Activated CD4-positive, alpha-beta memory T cell treated with anti-CD3 and anti-CD28 coated beads for 36 hours (primary cell): ENCODE measurements at regions of chr18 and their contacts with region 1.

Region 1: DNA sequence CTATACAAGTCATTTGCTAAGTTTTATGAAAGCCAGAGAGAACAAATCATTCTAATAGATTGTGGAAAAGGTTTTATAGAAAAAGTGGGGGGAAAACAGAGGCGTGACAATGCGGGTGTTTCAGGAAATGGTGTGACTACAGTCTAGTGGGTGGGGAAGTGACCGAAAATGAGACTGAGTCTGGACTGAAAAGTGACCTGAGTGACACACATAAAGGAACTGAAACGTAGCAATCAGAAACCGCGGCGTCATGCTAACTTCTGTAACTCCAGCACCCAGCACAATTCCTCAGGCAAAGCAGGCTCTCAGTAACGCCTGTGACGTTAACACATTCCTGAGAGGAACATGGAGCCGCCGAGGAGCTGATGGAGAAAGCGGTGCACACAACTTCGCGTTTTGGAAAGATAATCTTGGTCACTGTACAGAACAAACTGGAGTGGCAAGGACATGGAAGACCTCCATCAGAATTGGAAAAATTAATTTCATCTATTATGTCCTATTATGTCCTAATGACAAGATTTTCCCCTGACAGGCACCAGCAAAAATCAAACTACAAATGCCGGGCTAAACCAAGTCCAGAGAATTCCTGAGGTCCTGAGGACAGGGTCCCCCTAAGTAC is 1.4 kb upstream of the CD226 start:
- DNase-seq: peak; percentile 85
- H3K4me3 Mint-ChIP-seq: no peak overlapping the region
- H3K27ac Mint-ChIP-seq: no peak overlapping the region
- H3K4me1 Mint-ChIP-seq: peaks cover 50% of the 10 kb centered on the region
- H3K27me3 Mint-ChIP-seq: no peaks in the 10 kb centered on the region

Region 2: DNA sequence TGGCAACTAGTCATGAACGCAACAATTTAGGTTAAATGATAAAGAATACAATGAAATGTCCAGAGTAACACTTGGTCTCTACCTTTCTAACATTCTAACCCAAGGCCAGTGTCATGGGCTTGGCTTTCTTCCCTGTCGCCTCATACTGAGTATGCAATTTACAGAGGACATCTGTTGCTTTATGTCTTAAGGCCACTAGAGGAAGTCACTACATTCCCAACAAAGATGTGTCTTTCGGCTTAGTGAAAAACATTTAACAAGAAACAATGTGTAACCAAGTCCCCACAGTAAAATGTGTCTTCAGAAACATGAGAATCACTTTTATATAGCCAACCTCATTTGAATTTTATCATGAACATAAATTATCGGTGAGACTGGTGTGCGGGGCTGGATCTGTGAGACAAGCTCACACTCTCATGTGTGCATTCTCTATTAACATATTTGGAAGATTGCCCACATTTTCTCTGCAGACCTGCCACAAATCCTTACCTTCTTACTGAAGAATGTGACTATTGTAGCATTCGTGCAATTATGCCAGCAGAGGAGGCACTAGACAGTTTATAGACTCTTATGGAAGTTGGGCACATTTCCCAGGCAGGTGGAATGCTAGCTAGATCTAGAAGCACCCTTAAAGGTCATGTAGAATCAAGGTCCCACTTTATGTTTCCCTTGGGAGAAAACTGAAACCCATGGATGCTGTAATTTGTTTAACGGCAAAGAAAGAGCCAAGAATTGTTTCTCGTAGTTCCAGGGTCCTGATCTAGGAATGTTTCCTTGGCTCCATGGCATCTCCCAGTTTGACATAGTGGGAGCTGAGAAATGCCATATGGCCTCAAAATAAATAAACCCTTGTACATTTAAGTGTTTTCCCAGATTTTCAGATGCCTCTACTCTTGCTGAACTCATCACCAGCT is 103.2 kb before region 1 on chr18:
- CTCF ChIA-PET with region 1: no interaction called
- POLR2A ChIA-PET with region 1: no interaction called
- intact Hi-C with region 1: no loop called
- DNase-seq: no peak
- H3K4me3 Mint-ChIP-seq: no peak overlapping the region
- H3K27ac Mint-ChIP-seq: no peak overlapping the region
- H3K4me1 Mint-ChIP-seq: no peaks in the 10 kb centered on the region
- H3K27me3 Mint-ChIP-seq: no peaks in the 10 kb centered on the region

Region 3: DNA sequence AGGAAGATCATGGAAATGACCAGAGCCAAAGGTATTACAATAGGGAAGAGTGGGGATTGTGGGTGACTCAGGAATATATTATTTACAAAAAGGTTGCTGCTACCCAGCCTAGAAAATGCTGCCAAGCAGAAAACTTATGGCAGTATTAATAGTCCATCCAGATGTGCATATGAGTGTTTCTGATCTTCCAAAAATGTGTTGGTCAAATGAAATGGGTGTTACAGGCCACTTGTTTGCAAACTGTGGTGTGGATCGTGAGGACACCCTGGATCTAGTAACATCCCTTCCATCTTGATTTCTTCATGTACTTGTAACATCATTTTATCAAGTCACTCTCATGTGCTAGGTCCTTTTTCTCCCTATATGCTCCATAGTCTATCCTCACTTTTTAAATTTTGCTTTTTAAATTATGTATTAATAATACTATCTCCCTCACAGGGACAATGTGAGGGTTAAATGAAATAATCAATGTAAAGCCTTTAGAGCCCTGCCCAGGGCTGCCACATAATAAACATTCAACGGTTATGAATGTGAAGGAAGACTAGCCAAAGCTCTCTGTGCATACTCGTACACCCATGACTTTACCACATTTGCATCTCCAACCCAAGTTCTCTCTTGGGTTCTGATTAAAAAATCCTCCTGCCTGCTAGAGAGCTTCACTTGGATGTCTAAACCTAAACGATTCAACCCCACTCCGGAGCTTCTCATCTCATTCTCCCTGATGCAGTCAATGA is 19.8 kb before region 1 on chr18:
- CTCF ChIA-PET with region 1: no interaction called
- POLR2A ChIA-PET with region 1: no interaction called
- intact Hi-C with region 1: no loop called
- DNase-seq: no peak
- H3K4me3 Mint-ChIP-seq: no peak overlapping the region
- H3K27ac Mint-ChIP-seq: no peak overlapping the region
- H3K4me1 Mint-ChIP-seq: peaks cover 53% of the 10 kb centered on the region
- H3K27me3 Mint-ChIP-seq: no peaks in the 10 kb centered on the region

Region 4: DNA sequence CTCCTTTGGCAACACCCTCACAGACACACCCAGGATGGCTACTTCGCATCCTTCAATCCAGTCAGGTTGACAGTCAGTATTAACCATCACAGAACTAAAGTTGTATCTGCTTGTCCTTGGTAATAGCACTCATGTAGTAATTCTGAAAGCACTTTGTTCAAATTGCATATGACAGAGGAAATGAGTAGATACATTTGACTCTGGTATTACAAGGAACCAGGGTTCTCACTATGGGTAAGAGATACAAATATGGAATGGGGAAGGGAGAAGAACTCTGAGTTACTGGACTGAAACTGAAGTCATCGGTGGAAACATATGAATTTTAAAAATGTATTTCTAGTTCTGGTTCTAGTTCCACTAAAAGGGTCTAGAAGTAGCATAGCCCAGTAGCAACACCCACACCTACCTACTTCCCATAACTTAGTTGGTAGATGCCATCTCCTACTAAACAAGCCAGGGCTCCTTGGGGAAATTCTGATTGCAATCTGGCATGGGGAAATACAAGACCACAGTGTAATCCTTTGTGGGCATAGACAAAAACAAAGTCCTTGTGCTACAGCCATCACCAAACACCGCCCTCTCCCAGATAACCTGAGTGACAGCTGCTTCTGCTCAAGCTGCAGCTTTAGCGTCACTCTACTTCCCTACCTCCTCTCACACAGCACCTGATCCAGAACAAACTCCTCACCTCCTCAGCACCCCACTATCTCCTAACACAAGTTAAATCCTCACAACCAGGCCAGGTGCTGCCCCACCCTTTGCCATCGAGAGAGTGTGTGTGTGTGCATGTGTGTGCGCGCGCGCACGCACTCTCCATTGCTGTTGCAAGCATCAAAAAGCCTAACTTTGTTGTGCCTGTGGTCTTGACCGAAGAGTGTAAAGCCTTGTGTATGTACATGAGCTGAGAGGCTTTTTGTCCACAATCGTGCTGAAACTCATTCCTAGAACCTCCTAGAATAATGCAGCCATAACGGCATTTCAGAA is 30.0 kb after region 1 on chr18:
- CTCF ChIA-PET with region 1: no interaction called
- POLR2A ChIA-PET with region 1: no interaction called
- intact Hi-C with region 1: loop called (anchors 1 kb)
- DNase-seq: peak; percentile 25
- H3K4me3 Mint-ChIP-seq: no peak overlapping the region
- H3K27ac Mint-ChIP-seq: peak overlapping the region; percentile 65
- H3K4me1 Mint-ChIP-seq: peaks cover 45% of the 10 kb centered on the region
- H3K27me3 Mint-ChIP-seq: no peaks in the 10 kb centered on the region